ENCODE measurements at regions of chr2 and their contacts with region 1.

Region 1: DNA sequence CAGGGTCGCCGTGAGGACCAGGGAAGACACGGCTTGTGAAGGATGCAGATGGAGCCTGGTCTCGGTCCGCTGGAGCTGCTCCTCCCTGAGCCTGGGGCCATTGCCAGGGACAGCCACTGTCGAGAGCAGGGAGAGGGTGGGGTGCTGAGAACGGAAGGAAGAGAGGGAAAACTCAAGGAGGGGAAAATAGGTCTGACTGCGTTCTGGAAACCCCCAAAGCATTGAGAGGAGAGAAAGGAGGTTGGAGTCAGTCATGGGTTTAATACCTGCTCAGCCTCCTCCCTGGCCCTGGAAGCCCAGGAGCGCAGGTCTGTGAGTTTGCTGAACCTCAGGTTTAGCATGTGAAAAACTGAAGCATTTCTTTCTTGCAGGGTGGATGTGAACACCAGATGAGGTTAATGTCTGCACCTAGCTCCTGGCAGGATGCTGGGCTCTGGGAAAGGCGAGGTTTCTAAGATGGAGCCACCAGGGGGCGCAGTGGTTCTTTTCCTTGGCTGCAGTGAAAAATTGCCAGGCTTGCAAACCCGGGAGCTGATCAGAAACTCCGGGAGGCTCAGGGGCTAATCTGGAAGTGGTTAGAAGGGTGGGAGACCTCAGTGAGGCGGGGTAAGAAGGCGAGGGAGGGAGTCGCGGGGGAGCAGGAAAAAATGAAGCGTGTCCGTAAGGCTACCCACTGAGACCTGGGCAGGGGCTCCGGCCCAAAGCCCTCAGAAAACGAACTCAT is 33.6 kb upstream of the RNF149 start:
- DNase-seq: peak; percentile 86 to 92
- H3K4me3 ChIP-seq: no peak overlapping the region
- H3K4me3 Mint-ChIP-seq: no peak overlapping the region
- H3K27ac Mint-ChIP-seq: peak overlapping the region; percentile 37
- H3K4me1 ChIP-seq: peaks cover 57% of the 10 kb centered on the region
- H3K4me1 Mint-ChIP-seq: peaks cover 49% of the 10 kb centered on the region
- H3K27me3 ChIP-seq: no peaks in the 10 kb centered on the region
- H3K27me3 Mint-ChIP-seq: no peaks in the 10 kb centered on the region
- CTCF ChIP-seq: peak; percentile 88 to 93

Region 2: DNA sequence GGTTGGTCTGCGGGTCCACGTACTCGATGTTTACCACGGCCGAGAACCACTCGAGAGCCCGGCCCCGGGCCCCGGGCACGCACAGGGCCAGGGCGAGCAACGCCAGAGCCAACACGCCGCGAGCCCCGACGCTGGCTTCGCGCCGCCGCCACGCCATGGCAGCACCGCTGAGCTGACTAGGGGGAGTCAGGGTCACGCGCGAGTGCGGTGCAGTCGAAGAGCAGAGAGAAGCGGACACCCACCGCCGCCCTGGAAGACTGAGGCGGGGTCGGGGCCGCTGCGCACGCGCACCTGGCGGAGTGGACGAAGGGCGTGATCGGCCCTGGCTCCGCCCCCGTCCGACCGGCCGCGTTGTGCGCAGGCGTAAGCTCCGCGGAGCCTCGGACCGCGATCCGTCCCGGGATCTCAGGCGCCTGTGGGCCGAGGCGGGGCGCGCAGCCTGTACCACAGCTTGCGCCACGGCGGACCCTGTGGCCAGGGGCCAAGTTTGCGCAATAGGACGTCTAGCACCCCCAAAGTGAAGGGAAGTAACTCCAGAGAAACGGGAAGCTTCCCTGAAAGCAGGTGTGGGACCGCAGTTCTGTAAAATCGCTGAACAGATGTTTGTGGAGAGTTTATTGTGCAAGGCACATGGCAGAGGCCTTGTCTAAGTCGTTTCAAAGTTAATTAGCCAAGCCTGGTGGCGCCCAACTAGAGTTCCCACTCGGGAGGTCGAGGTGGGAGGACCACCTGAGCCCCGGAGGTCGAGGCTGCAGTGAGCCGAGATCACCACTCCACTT is 33.4 kb before region 1 on chr2 and contains the start of gene RNF149:
- CTCF ChIA-PET with region 1: interaction called, 4 read pairs
- POLR2A ChIA-PET with region 1: interaction called, 3 read pairs
- intact Hi-C with region 1: loop called (anchors 5 kb)
- DNase-seq: peak; percentile 92 to 98
- H3K4me3 ChIP-seq: peak within 1 kb of the TSS; percentile 97
- H3K4me3 Mint-ChIP-seq: peak within 1 kb of the TSS; percentile 83
- H3K27ac Mint-ChIP-seq: peak within 1 kb of the TSS; percentile 53
- H3K4me1 ChIP-seq: peaks cover 40% of the 10 kb centered on the region
- H3K4me1 Mint-ChIP-seq: peaks cover 39% of the 10 kb centered on the region
- H3K27me3 ChIP-seq: no peaks in the 10 kb centered on the region
- H3K27me3 Mint-ChIP-seq: no peaks in the 10 kb centered on the region
- CTCF ChIP-seq: no peak
- total RNA-seq, gene RNF149: 96.8 and 101 TPM in 2 replicates

Region 3: GRCh38 chr2:101387151-101387807 is 45.2 kb after region 1 on chr2 and contains the start of gene CREG2:
- CTCF ChIA-PET with region 1: interaction called, 49 read pairs
- POLR2A ChIA-PET with region 1: interaction called, 7 read pairs
- intact Hi-C with region 1: loop called (anchors 1 kb)
- DNase-seq: peak; percentile 81 to 92
- H3K4me3 ChIP-seq: peak within 1 kb of the TSS; percentile 90
- H3K4me3 Mint-ChIP-seq: peak within 1 kb of the TSS; percentile 85
- H3K27ac Mint-ChIP-seq: peak within 1 kb of the TSS; percentile 45
- H3K4me1 ChIP-seq: peaks cover 13% of the 10 kb centered on the region
- H3K4me1 Mint-ChIP-seq: peaks cover 12% of the 10 kb centered on the region
- H3K27me3 ChIP-seq: no peaks in the 10 kb centered on the region
- H3K27me3 Mint-ChIP-seq: no peaks in the 10 kb centered on the region
- CTCF ChIP-seq: peak; percentile 70 to 73
- total RNA-seq, gene CREG2: 119 and 120 TPM in 2 replicates

Region 4: DNA sequence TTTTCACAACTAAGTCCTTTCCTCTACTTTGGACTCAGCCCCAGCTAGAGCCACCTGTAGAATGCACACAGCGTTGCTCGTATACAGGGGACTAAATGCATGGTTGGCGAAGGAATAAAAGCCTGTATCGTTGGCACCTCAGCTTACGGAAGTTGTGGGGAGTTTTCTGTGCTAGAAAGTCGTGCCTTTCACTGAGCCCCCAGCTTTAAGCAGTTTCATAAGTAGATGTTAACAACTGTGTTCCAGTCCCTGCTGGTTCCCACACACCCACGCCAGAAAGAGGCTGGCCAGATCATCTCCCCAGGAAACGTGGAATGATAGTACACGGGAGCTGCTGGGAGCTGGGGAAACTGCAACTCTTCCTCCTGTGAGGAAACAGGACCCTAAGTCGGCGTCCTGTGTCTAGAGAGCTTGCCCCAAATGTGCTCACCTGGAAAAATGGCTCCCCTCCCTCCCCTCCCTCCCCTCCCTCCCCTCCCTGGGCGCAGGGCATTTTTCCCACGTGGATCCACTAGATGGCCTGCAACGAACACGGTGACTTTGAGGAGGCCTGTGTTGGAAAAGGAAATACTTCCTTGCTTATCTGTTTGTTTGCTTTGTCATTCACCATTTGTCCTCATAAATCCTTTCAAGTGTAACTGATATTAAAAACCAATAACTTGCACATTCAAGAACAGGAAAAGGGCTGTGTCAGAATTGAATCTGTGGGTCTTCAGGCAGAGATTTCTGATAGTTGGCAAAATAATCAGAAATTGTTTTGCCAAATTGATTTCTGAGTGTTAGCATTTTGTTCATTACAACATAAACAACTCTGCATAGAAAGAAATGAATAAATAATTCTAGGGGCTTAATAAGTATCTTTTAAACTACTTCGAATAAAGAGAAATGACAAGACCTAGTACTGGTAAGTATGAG is 176.8 kb after region 1 on chr2:
- CTCF ChIA-PET with region 1: interaction called, 3 read pairs
- POLR2A ChIA-PET with region 1: no interaction called
- intact Hi-C with region 1: loop called (anchors 2 kb)
- DNase-seq: peak; percentile 75 to 77
- H3K4me3 ChIP-seq: peak overlapping the region; percentile 20
- H3K4me3 Mint-ChIP-seq: peak overlapping the region; percentile 38
- H3K27ac Mint-ChIP-seq: no peak overlapping the region
- H3K4me1 ChIP-seq: peaks cover 23% of the 10 kb centered on the region; the same call in 1 of the 2 replicates
- H3K4me1 Mint-ChIP-seq: peaks cover 22% of the 10 kb centered on the region
- H3K27me3 ChIP-seq: no peaks in the 10 kb centered on the region
- H3K27me3 Mint-ChIP-seq: no peaks in the 10 kb centered on the region
- CTCF ChIP-seq: peak; percentile 66 to 80

Region 5: DNA sequence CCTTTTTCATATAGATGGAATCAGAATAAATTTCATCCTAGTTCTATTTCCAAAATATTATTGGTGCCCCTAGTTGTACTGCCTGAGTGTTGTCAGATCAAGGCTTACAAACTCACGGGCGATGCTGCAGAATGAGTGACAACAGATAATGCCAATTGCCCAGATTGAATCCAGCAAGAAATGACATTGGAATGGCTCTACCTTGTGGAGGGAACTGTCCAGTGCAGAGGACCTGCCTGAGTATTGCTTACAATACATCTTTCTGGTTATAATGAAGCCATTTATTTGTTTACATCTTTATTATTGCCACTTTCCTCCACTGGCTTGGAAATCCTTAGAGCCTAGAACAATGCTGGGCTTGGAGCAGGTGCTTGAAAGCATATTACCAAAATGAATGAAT is 641.9 kb after region 1 on chr2:
- CTCF ChIA-PET with region 1: no interaction called
- POLR2A ChIA-PET with region 1: no interaction called
- intact Hi-C with region 1: loop called (anchors 5 kb)
- DNase-seq: peak in 1 of 2 experiments; percentile 34
- H3K4me3 ChIP-seq: no peak overlapping the region
- H3K4me3 Mint-ChIP-seq: no peak overlapping the region
- H3K27ac Mint-ChIP-seq: no peak overlapping the region
- H3K4me1 ChIP-seq: peaks cover 53% of the 10 kb centered on the region
- H3K4me1 Mint-ChIP-seq: peaks cover 35% of the 10 kb centered on the region
- H3K27me3 ChIP-seq: no peaks in the 10 kb centered on the region
- H3K27me3 Mint-ChIP-seq: no peaks in the 10 kb centered on the region
- CTCF ChIP-seq: peak; percentile 18 to 39

Measured in Caco-2 (cell line).